Naive thymus-derived CD4-positive, alpha-beta T cell (primary cell): ENCODE measurements at regions of chrX and their contacts with region 1.

Region 1: GRCh38 chrX:134520860-134521390 is 61.0 kb downstream of the HPRT1 start:
- DNase-seq: peak in 1 of 9 donors; percentile 2
- ATAC-seq: no peak
- H3K4me3 ChIP-seq: no peak overlapping the region
- H3K4me3 Mint-ChIP-seq: no peak overlapping the region
- H3K27ac ChIP-seq: no peak overlapping the region
- H3K27ac Mint-ChIP-seq: no peak overlapping the region
- H3K4me1 ChIP-seq: no peaks in the 10 kb centered on the region
- H3K4me1 Mint-ChIP-seq: peaks cover 0 to 8% (median 3%) of the 10 kb centered on the region in 7 donors
- H3K27me3 ChIP-seq: no peaks in the 10 kb centered on the region
- H3K27me3 Mint-ChIP-seq: no peaks in the 10 kb centered on the region

Region 2: DNA sequence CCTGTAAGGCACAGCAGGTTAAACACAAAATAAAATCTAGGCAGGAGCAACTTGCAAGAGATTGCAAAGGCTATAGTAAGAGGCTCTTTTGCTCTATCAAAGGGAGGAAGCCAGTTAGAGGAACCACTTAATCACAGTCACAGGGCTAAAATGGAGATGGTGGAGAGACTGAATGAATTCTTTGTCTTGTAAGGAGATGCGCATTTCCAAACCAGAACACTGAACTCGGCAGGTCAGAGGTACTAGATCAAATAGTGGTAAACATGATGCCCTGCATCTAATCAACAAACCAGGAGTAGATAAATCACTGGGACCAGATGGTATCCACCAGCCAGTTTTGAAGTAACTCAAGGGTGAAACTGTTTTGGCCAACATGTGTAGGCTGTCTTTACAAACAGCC is 1161.5 kb before region 1 on chrX:
- CTCF ChIA-PET with region 1: no interaction called
- POLR2A ChIA-PET with region 1: no interaction called
- intact Hi-C with region 1: no loop called
- DNase-seq: no peak
- ATAC-seq: no peak
- H3K4me3 ChIP-seq: no peak overlapping the region
- H3K4me3 Mint-ChIP-seq: no peak overlapping the region
- H3K27ac ChIP-seq: no peak overlapping the region
- H3K27ac Mint-ChIP-seq: no peak overlapping the region
- H3K4me1 ChIP-seq: no peaks in the 10 kb centered on the region
- H3K4me1 Mint-ChIP-seq: no peaks in the 10 kb centered on the region
- H3K27me3 ChIP-seq: no peaks in the 10 kb centered on the region
- H3K27me3 Mint-ChIP-seq: peaks cover 0 to 5% (median 3%) of the 10 kb centered on the region in 5 donors

Region 3: GRCh38 chrX:134460005-134460861 is 60.7 kb before region 1 on chrX and contains the start of gene HPRT1:
- CTCF ChIA-PET with region 1: no interaction called
- POLR2A ChIA-PET with region 1: no interaction called
- intact Hi-C with region 1: no loop called
- DNase-seq: peak; percentile 57 to 80 (median 72)
- ATAC-seq: peak; percentile 99
- H3K4me3 ChIP-seq: peak within 1 kb of the TSS; percentile 53
- H3K4me3 Mint-ChIP-seq: peak within 1 kb of the TSS; percentile 78 to 97 (median 91)
- H3K27ac ChIP-seq: peak within 1 kb of the TSS; percentile 80
- H3K27ac Mint-ChIP-seq: peak within 1 kb of the TSS in 8 of 9 donors; percentile 14 to 95 (median 84)
- H3K4me1 ChIP-seq: no peaks in the 10 kb centered on the region
- H3K4me1 Mint-ChIP-seq: peaks cover 0 to 20% (median 10%) of the 10 kb centered on the region in 7 donors
- H3K27me3 ChIP-seq: no peaks in the 10 kb centered on the region
- H3K27me3 Mint-ChIP-seq: no peaks in the 10 kb centered on the region
- total RNA-seq, gene HPRT1: 13.6 to 73.7 (median 14.9) TPM

Region 4: GRCh38 chrX:134764212-134764785 is 243.4 kb after region 1 on chrX:
- CTCF ChIA-PET with region 1: no interaction called
- POLR2A ChIA-PET with region 1: no interaction called
- intact Hi-C with region 1: loop called in 1 of 2 experiments (anchors 5 kb)
- DNase-seq: peak in 4 of 9 donors; percentile 7 to 16 (median 10)
- ATAC-seq: peak; percentile 78
- H3K4me3 ChIP-seq: no peak overlapping the region
- H3K4me3 Mint-ChIP-seq: no peak overlapping the region
- H3K27ac ChIP-seq: no peak overlapping the region
- H3K27ac Mint-ChIP-seq: no peak overlapping the region
- H3K4me1 ChIP-seq: no peaks in the 10 kb centered on the region
- H3K4me1 Mint-ChIP-seq: no peaks in the 10 kb centered on the region
- H3K27me3 ChIP-seq: no peaks in the 10 kb centered on the region
- H3K27me3 Mint-ChIP-seq: no peaks in the 10 kb centered on the region

Region 5: DNA sequence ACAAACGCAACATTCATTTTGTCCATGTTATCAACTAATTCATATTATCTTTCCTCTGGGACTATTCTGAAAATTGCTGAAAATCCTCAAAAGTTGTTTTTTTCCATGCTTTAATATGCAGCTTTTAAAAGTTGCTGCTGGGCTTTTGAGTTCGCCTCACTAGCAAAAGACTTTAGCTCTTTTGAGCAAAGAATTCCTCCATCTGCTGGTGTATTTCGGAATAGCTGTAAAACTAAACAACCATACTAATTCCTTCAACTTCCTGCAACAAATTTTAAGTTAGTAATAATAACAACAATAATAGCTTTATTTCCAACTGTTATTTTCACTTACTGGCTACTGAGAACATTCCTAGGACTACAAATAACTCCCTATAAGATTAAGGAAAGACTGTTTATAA is 261.9 kb after region 1 on chrX:
- CTCF ChIA-PET with region 1: no interaction called
- POLR2A ChIA-PET with region 1: no interaction called
- intact Hi-C with region 1: loop called in 1 of 2 experiments (anchors 5 kb)
- DNase-seq: peak in 3 of 9 donors; percentile 3 to 25 (median 15)
- ATAC-seq: no peak
- H3K4me3 ChIP-seq: no peak overlapping the region
- H3K4me3 Mint-ChIP-seq: no peak overlapping the region
- H3K27ac ChIP-seq: no peak overlapping the region
- H3K27ac Mint-ChIP-seq: no peak overlapping the region
- H3K4me1 ChIP-seq: no peaks in the 10 kb centered on the region
- H3K4me1 Mint-ChIP-seq: no peaks in the 10 kb centered on the region
- H3K27me3 ChIP-seq: no peaks in the 10 kb centered on the region
- H3K27me3 Mint-ChIP-seq: no peaks in the 10 kb centered on the region